Lower lobe of right lung (tissue), 2 donors: ENCODE measurements at regions of chr1 and their contacts with region 1.

Region 1: GRCh38 chr1:23634842-23635651 is 56.6 kb upstream of the RPL11 start:
- DNase-seq: no peak
- ATAC-seq: peak; percentile 82 to 85
- H3K4me3 ChIP-seq: peak overlapping the region; percentile 49
- H3K27ac ChIP-seq: peak overlapping the region; percentile 75
- H3K4me1 ChIP-seq: peaks cover 16% of the 10 kb centered on the region
- H3K27me3 ChIP-seq: no peaks in the 10 kb centered on the region
- CTCF ChIP-seq: peak; percentile 95

Region 2: GRCh38 chr1:23524716-23525401 is 110.2 kb before region 1 on chr1:
- intact Hi-C with region 1: no loop called
- DNase-seq: no peak
- ATAC-seq: peak; percentile 5 to 6
- H3K4me3 ChIP-seq: no peak overlapping the region
- H3K27ac ChIP-seq: no peak overlapping the region
- H3K4me1 ChIP-seq: peaks cover 45% of the 10 kb centered on the region
- H3K27me3 ChIP-seq: no peaks in the 10 kb centered on the region
- CTCF ChIP-seq: no peak

Region 3: GRCh38 chr1:23544444-23545389 is 90.3 kb before region 1 on chr1:
- intact Hi-C with region 1: loop called (anchors 5 kb)
- DNase-seq: peak; percentile 77
- ATAC-seq: peak; percentile 81 to 84
- H3K4me3 ChIP-seq: no peak overlapping the region
- H3K27ac ChIP-seq: no peak overlapping the region
- H3K4me1 ChIP-seq: peaks cover 45% of the 10 kb centered on the region
- H3K27me3 ChIP-seq: no peaks in the 10 kb centered on the region
- CTCF ChIP-seq: peak; percentile 93